ENCODE measurements at regions of chr19 and their contacts with region 1.

Region 1: DNA sequence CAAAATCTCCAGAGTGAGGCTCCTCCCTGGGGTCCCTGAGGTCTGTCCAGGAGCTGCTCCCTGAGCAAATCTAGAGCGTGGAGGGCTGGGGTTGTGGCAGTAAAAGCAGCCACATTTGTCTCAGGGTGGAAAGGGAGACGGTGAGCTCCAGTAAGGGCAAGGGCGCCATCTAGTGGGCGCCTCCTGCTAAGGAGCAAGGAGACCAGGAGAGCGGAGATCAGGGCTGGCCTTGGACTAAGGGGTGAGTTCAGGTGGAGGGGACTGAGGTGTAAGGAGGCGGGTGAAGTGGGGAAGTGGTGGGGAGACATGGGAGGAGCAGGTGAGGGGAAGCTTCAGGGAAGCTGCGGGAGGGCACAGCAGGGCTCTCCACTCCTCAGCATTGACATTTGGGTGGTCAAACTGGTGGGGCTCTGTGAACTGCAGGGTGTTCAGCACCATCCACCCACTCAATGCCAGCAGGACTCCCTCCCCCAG is 5.3 kb upstream of the CEACAM21 start:
- DNase-seq: peak; percentile 81 to 92 (median 84)
- ATAC-seq: peak; percentile 96
- H3K4me3 ChIP-seq: no peak overlapping the region
- H3K4me1 ChIP-seq: no peaks in the 10 kb centered on the region
- CTCF ChIP-seq: peak; percentile 78

Region 2: DNA sequence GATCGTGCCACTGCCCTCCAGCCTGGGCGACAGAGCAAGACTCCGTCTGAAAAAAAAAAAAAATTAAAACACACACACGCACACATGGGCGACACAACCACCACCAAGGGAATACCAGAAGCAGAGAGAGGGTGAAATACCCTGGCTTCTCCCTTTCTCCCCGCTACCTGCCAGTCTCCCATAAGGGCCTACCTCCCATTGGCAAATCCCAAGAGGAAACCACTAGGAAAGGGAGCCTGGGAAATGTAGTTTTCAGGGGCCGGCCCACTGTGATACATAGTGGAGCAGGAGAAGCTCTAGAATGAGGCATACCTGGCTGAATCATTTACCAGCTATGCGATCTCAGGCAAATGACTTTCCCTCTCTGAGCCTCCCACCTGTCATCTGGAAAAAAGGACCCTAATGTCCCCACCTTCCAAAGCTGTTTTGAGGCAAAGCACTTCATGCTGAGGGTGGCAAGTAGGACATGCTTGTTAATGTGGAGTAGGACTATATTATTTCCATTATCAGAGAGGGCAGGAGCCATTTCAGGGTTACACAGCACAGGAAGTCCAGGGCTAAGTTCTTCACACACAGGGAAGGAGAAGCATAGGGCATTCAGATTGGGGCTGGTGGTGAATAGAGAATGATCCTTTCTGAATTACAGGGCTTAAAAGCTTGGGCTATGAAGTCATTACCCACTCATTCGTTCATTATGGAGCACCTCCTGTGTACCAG is 320.8 kb before region 1 on chr19:
- intact Hi-C with region 1: loop called in 1 of 2 experiments (anchors 10 kb)
- DNase-seq: peak in 1 of 3 donors; percentile 2
- ATAC-seq: no peak
- H3K4me3 ChIP-seq: no peak overlapping the region
- H3K4me1 ChIP-seq: no peaks in the 10 kb centered on the region
- CTCF ChIP-seq: no peak

Region 3: GRCh38 chr19:41426952-41427646 is 143.6 kb before region 1 on chr19 and contains the start of gene B3GNT8:
- intact Hi-C with region 1: no loop called
- DNase-seq: peak; percentile 92 to 94 (median 94)
- ATAC-seq: peak; percentile 91
- H3K4me3 ChIP-seq: peak within 1 kb of the TSS; percentile 34
- H3K4me1 ChIP-seq: peaks cover 15% of the 10 kb centered on the region
- CTCF ChIP-seq: no peak
- total RNA-seq, gene B3GNT8: 28.8 to 69.4 (median 34.3) TPM

Region 4: GRCh38 chr19:41449079-41449864 is 121.4 kb before region 1 on chr19:
- intact Hi-C with region 1: loop called (anchors 5 to 10 kb)
- DNase-seq: peak; percentile 72 to 80 (median 77)
- ATAC-seq: peak; percentile 94
- H3K4me3 ChIP-seq: no peak overlapping the region
- H3K4me1 ChIP-seq: no peaks in the 10 kb centered on the region
- CTCF ChIP-seq: peak; percentile 93

Region 5: GRCh38 chr19:41521931-41522555 is 48.6 kb before region 1 on chr19:
- intact Hi-C with region 1: no loop called
- DNase-seq: peak in 2 of 3 donors; percentile 34 to 41
- ATAC-seq: peak; percentile 65
- H3K4me3 ChIP-seq: no peak overlapping the region
- H3K4me1 ChIP-seq: no peaks in the 10 kb centered on the region
- CTCF ChIP-seq: no peak

Region 6: GRCh38 chr19:41734617-41735016 is 163.9 kb after region 1 on chr19:
- intact Hi-C with region 1: no loop called
- DNase-seq: peak; percentile 77 to 86 (median 83)
- ATAC-seq: peak; percentile 78
- H3K4me3 ChIP-seq: no peak overlapping the region
- H3K4me1 ChIP-seq: peaks cover 27% of the 10 kb centered on the region
- CTCF ChIP-seq: no peak

Measured in mucosa of descending colon (tissue), 3 donors.